A673 (cell line): ENCODE measurements at regions of chr10 and their contacts with region 1.

Region 1: DNA sequence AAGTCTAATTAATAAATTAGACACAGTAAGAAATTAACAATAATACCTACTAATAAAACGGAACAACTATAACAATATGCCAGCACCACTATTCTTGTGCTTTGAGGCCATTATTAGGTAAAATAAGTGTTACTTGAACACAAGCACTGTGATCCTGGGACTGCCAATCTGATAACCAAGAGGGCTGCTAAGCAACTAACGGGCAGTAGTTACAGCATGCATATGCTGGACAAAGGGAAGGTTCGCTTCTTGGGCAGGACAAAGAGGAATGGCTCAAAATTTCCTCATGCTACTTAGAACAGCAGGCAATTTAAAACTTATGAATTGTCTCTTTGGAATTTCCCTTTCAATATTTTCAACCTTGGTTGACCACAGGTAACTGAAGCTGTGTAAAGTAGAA is 718.6 kb downstream of the SORCS3 start:
- DNase-seq: no peak
- H3K4me3 ChIP-seq: no peak overlapping the region
- H3K27ac ChIP-seq: no peak overlapping the region
- H3K4me1 ChIP-seq: no peaks in the 10 kb centered on the region
- H3K27me3 ChIP-seq: peaks cover 42% of the 10 kb centered on the region
- CTCF ChIP-seq: no peak

Region 2: DNA sequence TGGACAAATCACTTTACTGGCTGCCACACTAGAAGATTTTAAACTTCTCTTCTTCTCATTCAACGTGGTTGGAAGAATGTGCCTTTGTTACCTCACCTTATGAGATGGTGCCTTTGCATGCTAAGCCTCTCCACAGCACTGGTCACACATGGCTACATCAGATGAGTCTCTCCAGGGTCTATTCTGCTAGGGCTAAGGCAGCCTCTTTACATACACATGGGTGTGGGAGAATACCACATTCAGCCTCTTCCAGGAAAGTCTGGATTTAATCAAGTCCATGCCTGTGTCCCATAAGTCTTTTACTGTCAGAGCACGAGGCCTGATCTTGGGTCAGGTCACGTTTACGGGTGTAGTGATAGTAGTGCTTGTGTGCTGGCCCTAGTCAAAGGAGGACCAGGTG is 17.1 kb before region 1 on chr10:
- CTCF ChIA-PET with region 1: no interaction called
- POLR2A ChIA-PET with region 1: no interaction called
- intact Hi-C with region 1: loop called (anchors 1 kb)
- DNase-seq: no peak
- H3K4me3 ChIP-seq: no peak overlapping the region
- H3K27ac ChIP-seq: no peak overlapping the region
- H3K4me1 ChIP-seq: no peaks in the 10 kb centered on the region
- H3K27me3 ChIP-seq: peaks cover 80% of the 10 kb centered on the region
- CTCF ChIP-seq: no peak

Region 3: DNA sequence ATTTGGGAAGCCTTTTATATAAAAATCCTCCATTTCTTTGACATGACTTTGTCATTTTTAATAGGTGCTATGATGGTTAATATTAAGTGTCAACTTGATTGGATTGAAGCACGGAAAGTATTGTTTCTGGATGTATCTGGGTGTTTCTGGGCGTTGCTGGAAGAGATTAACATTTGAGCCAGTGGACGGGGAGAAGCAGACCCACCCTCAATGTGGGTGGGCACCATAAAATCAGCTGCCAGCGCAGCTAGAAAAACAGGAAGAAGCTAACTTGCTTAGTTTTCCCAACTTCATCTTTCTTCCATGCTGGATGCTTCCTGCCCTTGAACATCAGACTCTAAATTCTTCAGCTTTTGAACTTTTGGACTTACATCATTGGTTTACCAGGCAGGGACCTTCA is 284.4 kb after region 1 on chr10:
- CTCF ChIA-PET with region 1: no interaction called
- POLR2A ChIA-PET with region 1: no interaction called
- intact Hi-C with region 1: no loop called
- DNase-seq: no peak
- H3K4me3 ChIP-seq: no peak overlapping the region
- H3K27ac ChIP-seq: no peak overlapping the region
- H3K4me1 ChIP-seq: no peaks in the 10 kb centered on the region
- H3K27me3 ChIP-seq: no peaks in the 10 kb centered on the region
- CTCF ChIP-seq: no peak